Vagina (tissue), 2 donors: ENCODE measurements at regions of chr10 and their contacts with region 1.

Region 1: GRCh38 chr10:117449636-117450035 is 74.4 kb upstream of the PDZD8 start:
- DNase-seq: no peak
- H3K4me3 ChIP-seq: no peak overlapping the region
- H3K27ac ChIP-seq: peak overlapping the region; percentile 60
- H3K4me1 ChIP-seq: peaks cover 9% of the 10 kb centered on the region
- H3K27me3 ChIP-seq: no peaks in the 10 kb centered on the region
- CTCF ChIP-seq: no peak
- POLR2A ChIP-seq: no peak

Region 2: GRCh38 chr10:117477961-117478670 is 28.5 kb after region 1 on chr10:
- intact Hi-C with region 1: loop called (anchors 2 kb)
- DNase-seq: no peak
- H3K4me3 ChIP-seq: no peak overlapping the region
- H3K27ac ChIP-seq: peak overlapping the region; percentile 74
- H3K4me1 ChIP-seq: peaks cover 34% of the 10 kb centered on the region
- H3K27me3 ChIP-seq: no peaks in the 10 kb centered on the region
- CTCF ChIP-seq: peak in 1 of 3 experiments; percentile 11
- POLR2A ChIP-seq: no peak